ENCODE measurements at regions of chr12 and their contacts with region 1.

Region 1: GRCh38 chr12:112992541-112993398 is 14.5 kb downstream of the OAS2 start:
- DNase-seq: peak; percentile 37 to 62 (median 50)
- H3K4me3 ChIP-seq: no peak overlapping the region
- H3K4me3 Mint-ChIP-seq: no peak overlapping the region
- H3K27ac ChIP-seq: no peak overlapping the region
- H3K27ac Mint-ChIP-seq: peak overlapping the region; percentile 24 to 88 (median 67)
- H3K4me1 ChIP-seq: peaks cover 9% of the 10 kb centered on the region
- H3K4me1 Mint-ChIP-seq: peaks cover 22 to 26% (median 24%) of the 10 kb centered on the region in 4 donors
- H3K27me3 ChIP-seq: no peaks in the 10 kb centered on the region
- H3K27me3 Mint-ChIP-seq: no peaks in the 10 kb centered on the region

Region 2: DNA sequence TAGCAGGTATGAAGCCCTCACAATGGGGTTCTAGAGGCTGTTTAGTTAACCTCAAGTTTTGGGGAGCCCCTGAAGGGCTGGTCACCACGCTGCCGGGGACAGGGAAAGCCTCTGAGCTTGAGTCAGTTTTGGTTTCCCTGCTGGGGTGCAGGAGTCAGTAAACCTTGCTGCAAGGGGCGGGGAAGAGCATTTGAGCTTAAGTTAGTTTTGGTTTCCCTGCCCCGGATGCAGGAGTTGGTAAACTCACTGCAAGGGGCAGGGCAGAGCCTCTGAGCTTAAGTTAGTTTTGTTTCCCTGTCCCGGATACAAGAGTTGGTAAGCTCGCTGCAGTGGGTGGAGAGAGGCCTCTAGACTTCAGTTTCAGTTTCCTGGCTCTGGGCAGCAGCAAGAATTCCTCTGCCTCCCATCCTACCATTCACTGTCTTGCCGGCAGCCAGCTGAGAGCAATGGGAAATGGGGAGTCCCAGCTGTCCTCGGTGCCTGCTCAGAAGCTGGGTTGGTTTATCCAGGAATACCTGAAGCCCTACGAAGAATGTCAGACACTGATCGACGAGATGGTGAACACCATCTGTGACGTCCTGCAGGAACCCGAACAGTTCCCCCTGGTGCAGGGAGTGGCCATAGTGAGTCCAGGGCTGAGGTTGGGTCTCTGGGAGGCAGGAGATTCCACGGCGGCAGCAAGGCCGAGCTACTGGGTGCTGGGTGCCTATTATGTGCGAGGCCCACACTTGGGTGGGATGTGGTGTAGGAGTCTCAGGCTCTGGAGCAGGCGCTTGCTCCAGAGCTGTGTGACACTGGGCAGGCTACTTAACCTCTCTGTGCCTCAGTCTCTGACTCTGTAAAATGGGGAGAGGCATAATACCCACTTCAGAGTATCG is 14.4 kb before region 1 on chr12 and contains the start of gene OAS2:
- CTCF ChIA-PET with region 1: interaction called, 112 read pairs
- POLR2A ChIA-PET with region 1: interaction called, 101 read pairs
- intact Hi-C with region 1: loop called (anchors 1 kb)
- DNase-seq: peak; percentile 82 to 92 (median 87)
- H3K4me3 ChIP-seq: peak within 1 kb of the TSS; percentile 87 to 88
- H3K4me3 Mint-ChIP-seq: peak within 1 kb of the TSS; percentile 88 to 100 (median 99)
- H3K27ac ChIP-seq: peak within 1 kb of the TSS; percentile 91
- H3K27ac Mint-ChIP-seq: peak within 1 kb of the TSS; percentile 97 to 99 (median 99)
- H3K4me1 ChIP-seq: peaks cover 51% of the 10 kb centered on the region
- H3K4me1 Mint-ChIP-seq: peaks cover 28 to 58% (median 45%) of the 10 kb centered on the region in 4 donors
- H3K27me3 ChIP-seq: no peaks in the 10 kb centered on the region
- H3K27me3 Mint-ChIP-seq: no peaks in the 10 kb centered on the region
- total RNA-seq, gene OAS2: 73.5 to 77.4 TPM

Region 3: GRCh38 chr12:113030875-113031525 is 38.2 kb after region 1 on chr12:
- CTCF ChIA-PET with region 1: interaction called, 24 read pairs
- POLR2A ChIA-PET with region 1: no interaction called
- intact Hi-C with region 1: loop called (anchors 1 kb)
- DNase-seq: peak in 4 of 5 donors; percentile 24 to 35 (median 32)
- H3K4me3 ChIP-seq: no peak overlapping the region
- H3K4me3 Mint-ChIP-seq: no peak overlapping the region
- H3K27ac ChIP-seq: no peak overlapping the region
- H3K27ac Mint-ChIP-seq: no peak overlapping the region
- H3K4me1 ChIP-seq: no peaks in the 10 kb centered on the region
- H3K4me1 Mint-ChIP-seq: peaks cover 0 to 5% (median 3%) of the 10 kb centered on the region in 4 donors
- H3K27me3 ChIP-seq: no peaks in the 10 kb centered on the region
- H3K27me3 Mint-ChIP-seq: peaks cover 0 to 5% of the 10 kb centered on the region in 2 donors

Region 4: DNA sequence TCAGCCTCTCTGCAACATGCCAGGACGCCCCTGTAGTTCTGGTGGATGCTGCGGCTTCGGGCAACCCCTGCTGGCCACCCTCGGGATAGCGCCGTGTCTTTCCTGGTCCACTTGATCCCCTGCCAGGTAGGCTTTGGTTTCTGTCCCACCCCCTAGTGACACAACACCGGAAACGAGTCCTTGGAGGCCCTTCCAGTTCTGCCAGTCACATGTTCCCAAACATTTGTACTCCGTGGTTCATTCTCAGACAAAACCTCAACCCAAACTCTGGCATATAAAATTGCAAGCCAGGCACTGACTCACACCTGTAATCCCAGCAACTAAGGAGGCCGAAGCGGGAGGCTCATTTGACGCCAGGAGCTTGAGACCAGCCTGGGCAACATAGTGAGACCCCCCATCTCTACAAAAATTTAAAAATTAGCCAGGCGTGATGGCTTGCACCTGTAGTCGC is 105.7 kb after region 1 on chr12:
- CTCF ChIA-PET with region 1: interaction called, 4 read pairs
- POLR2A ChIA-PET with region 1: no interaction called
- intact Hi-C with region 1: loop called (anchors 10 kb)
- DNase-seq: peak; percentile 52 to 68 (median 60)
- H3K4me3 ChIP-seq: no peak overlapping the region
- H3K4me3 Mint-ChIP-seq: peak overlapping the region in 1 of 8 donors; percentile 4
- H3K27ac ChIP-seq: no peak overlapping the region
- H3K27ac Mint-ChIP-seq: peak overlapping the region in 4 of 7 donors; percentile 64 to 85 (median 75)
- H3K4me1 ChIP-seq: peaks cover 13% of the 10 kb centered on the region
- H3K4me1 Mint-ChIP-seq: peaks cover 14 to 41% (median 20%) of the 10 kb centered on the region in 4 donors
- H3K27me3 ChIP-seq: no peaks in the 10 kb centered on the region
- H3K27me3 Mint-ChIP-seq: peaks cover 0 to 1% of the 10 kb centered on the region in 2 donors